B cell (primary cell): ENCODE measurements at regions of chr2 and their contacts with region 1.

Region 1: GRCh38 chr2:176638167-176639015 is 369.1 kb downstream of the MTX2 start:
- DNase-seq: peak; percentile 65
- ATAC-seq: peak; percentile 51
- H3K4me3 ChIP-seq: peak overlapping the region in 4 of 5 experiments; percentile 31 to 62 (median 50)
- H3K4me3 Mint-ChIP-seq: peak overlapping the region; percentile 73
- H3K27ac ChIP-seq: no peak overlapping the region
- H3K27ac Mint-ChIP-seq: no peak overlapping the region
- H3K4me1 ChIP-seq: peaks cover 11 to 12% of the 10 kb centered on the region in 2 donors
- H3K4me1 Mint-ChIP-seq: peaks cover 8% of the 10 kb centered on the region
- H3K27me3 ChIP-seq: peaks cover 0 to 50% (median 39%) of the 10 kb centered on the region in 4 experiments
- H3K27me3 Mint-ChIP-seq: peaks cover 66% of the 10 kb centered on the region
- CTCF ChIP-seq: peak; percentile 72

Region 2: DNA sequence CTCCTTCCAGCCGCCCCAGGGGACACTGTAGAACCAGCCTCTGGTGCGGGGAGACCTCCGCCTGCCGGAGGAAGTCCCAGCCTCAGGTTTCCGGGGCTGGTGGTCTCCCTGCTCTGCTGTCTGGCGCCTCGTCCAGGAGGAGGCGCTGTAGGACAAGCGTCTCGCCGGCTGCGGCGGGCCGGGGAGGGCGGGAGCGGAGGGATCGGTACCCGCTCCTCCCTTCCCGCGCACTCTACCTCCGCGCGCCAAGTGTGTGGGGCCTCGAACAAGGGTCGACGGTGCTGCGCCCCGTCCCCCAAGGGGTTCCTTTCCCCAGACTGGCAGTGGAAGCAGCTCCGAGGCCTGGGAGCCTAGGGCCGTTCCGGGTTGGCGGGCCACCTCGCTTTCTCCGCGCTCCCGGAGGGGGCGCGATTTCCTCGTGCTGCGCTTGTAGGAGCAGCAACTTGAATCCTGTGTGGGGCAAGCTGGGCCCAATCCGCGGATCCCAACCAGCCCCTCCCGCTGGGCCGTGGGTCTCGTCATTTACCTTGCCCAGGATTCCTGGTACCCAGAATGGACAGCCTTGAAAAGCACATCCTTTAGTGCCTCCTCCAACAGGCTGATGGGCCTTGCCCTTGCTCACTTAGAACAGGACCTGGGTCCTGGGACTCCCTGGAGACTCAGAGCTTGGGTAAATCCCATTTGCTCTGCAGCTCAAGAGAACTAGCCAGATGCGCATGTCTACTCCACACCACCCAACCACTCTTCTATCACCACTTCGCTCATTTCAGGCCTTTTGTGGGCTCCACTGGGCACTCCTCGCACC is 497.7 kb before region 1 on chr2:
- CTCF ChIA-PET with region 1: interaction called, 17 read pairs
- POLR2A ChIA-PET with region 1: no interaction called
- intact Hi-C with region 1: no loop called
- DNase-seq: peak; percentile 74
- ATAC-seq: peak; percentile 73
- H3K4me3 ChIP-seq: peak overlapping the region in 2 of 5 experiments; percentile 29 to 32
- H3K4me3 Mint-ChIP-seq: peak overlapping the region; percentile 42
- H3K27ac ChIP-seq: no peak overlapping the region
- H3K27ac Mint-ChIP-seq: no peak overlapping the region
- H3K4me1 ChIP-seq: peaks cover 19 to 38% of the 10 kb centered on the region in 2 donors
- H3K4me1 Mint-ChIP-seq: peaks cover 23% of the 10 kb centered on the region
- H3K27me3 ChIP-seq: peaks cover 0 to 90% (median 68%) of the 10 kb centered on the region in 4 experiments
- H3K27me3 Mint-ChIP-seq: peaks cover 76% of the 10 kb centered on the region
- CTCF ChIP-seq: peak; percentile 61